CD4-positive, alpha-beta memory T cell (primary cell): ENCODE measurements at regions of chr14 and their contacts with region 1.

Region 1: DNA sequence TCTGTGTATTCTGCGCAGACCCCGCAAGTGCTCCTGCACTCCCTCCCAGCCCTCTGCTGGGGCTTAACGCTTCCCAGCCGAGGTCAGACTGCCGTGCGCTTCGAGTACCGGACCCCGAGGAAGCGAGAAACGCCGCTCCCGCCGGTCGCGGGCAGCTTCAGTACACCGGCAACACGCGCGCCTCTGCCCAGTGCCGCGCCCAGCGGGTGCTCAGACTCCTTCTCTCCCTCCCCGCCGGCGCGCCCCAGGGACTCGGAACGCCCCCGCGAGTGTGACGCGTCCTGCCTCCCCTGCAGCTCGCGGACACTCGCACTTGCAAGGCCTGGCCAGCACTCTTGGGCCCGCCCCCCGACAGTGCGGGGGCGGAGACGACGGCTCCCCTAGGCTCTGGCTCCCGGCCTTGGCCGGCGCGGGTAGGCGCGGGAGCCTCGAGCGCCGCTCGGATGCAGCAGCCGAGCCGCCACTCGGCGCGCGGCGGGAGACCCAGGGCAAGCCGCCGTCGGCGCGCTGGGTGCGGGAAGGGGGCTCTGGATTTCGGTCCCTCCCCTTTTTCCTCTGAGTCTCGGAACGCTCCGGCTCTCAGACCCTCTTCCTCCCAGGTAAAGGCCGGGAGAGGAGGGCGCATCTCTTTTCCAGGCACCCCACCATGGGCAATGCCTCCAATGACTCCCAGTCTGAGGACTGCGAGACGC is at the start of gene PTGER2:
- DNase-seq: peak; percentile 64 to 83 (median 74)
- H3K4me3 ChIP-seq: peak within 1 kb of the TSS; percentile 83 to 86
- H3K4me3 Mint-ChIP-seq: peak within 1 kb of the TSS; percentile 95 to 100 (median 99)
- H3K27ac ChIP-seq: peak within 1 kb of the TSS; percentile 59
- H3K27ac Mint-ChIP-seq: peak within 1 kb of the TSS; percentile 87 to 97 (median 92)
- H3K4me1 ChIP-seq: peaks cover 70% of the 10 kb centered on the region
- H3K4me1 Mint-ChIP-seq: peaks cover 45 to 90% (median 63%) of the 10 kb centered on the region in 4 donors
- H3K27me3 ChIP-seq: no peaks in the 10 kb centered on the region
- H3K27me3 Mint-ChIP-seq: peaks cover 0 to 2% of the 10 kb centered on the region in 2 donors
- total RNA-seq, gene PTGER2: 29.4 to 30.2 TPM

Region 2: DNA sequence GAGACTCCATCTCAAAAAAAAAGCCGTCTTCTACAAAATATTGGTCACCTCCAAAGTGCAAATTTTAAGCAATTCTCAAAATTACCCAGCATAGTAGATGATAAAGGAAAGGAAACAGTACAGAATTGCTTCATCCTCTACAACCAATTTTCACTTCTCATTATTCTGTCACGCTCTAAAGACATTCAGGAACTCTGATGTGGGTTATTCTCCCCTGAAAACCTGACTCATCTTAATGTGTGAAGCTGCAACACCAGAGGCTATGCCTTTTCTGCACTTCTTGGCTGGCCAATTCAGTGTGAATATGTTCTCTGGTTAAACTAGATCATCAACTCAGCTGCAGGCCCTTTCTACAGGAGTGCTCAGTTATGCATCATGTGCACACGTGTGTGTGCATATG is 11.1 kb after region 1 on chr14:
- CTCF ChIA-PET with region 1: interaction called, 9 read pairs
- POLR2A ChIA-PET with region 1: interaction called, 89 read pairs
- intact Hi-C with region 1: loop called (anchors 1 kb)
- DNase-seq: peak in 1 of 5 donors; percentile 53
- H3K4me3 ChIP-seq: no peak overlapping the region
- H3K4me3 Mint-ChIP-seq: peak overlapping the region in 7 of 8 donors; percentile 21 to 82 (median 59)
- H3K27ac ChIP-seq: no peak overlapping the region
- H3K27ac Mint-ChIP-seq: peak overlapping the region; percentile 0 to 89 (median 65)
- H3K4me1 ChIP-seq: peaks cover 87% of the 10 kb centered on the region
- H3K4me1 Mint-ChIP-seq: peaks cover 55 to 94% (median 74%) of the 10 kb centered on the region in 4 donors
- H3K27me3 ChIP-seq: no peaks in the 10 kb centered on the region
- H3K27me3 Mint-ChIP-seq: no peaks in the 10 kb centered on the region

Region 3: GRCh38 chr14:52351233-52352060 is 37.4 kb after region 1 on chr14:
- CTCF ChIA-PET with region 1: interaction called, 12 read pairs
- POLR2A ChIA-PET with region 1: interaction called, 81 read pairs
- intact Hi-C with region 1: loop called (anchors 1 kb)
- DNase-seq: no peak
- H3K4me3 ChIP-seq: peak overlapping the region; percentile 18 to 33
- H3K4me3 Mint-ChIP-seq: peak overlapping the region; percentile 83 to 90 (median 88)
- H3K27ac ChIP-seq: peak overlapping the region; percentile 27
- H3K27ac Mint-ChIP-seq: peak overlapping the region; percentile 90 to 95 (median 93)
- H3K4me1 ChIP-seq: peaks cover 75% of the 10 kb centered on the region
- H3K4me1 Mint-ChIP-seq: peaks cover 56 to 83% (median 68%) of the 10 kb centered on the region in 4 donors
- H3K27me3 ChIP-seq: no peaks in the 10 kb centered on the region
- H3K27me3 Mint-ChIP-seq: peaks cover 0 to 3% of the 10 kb centered on the region in 2 donors

Region 4: GRCh38 chr14:52402812-52403526 is 88.9 kb after region 1 on chr14:
- CTCF ChIA-PET with region 1: interaction called, 15 read pairs
- POLR2A ChIA-PET with region 1: interaction called, 44 read pairs
- intact Hi-C with region 1: loop called (anchors 2 kb)
- DNase-seq: peak in 4 of 5 donors; percentile 43 to 54 (median 50)
- H3K4me3 ChIP-seq: peak overlapping the region in 1 of 2 donors; percentile 9
- H3K4me3 Mint-ChIP-seq: peak overlapping the region in 6 of 8 donors; percentile 18 to 70 (median 50)
- H3K27ac ChIP-seq: no peak overlapping the region
- H3K27ac Mint-ChIP-seq: peak overlapping the region in 6 of 7 donors; percentile 5 to 33 (median 19)
- H3K4me1 ChIP-seq: peaks cover 67% of the 10 kb centered on the region
- H3K4me1 Mint-ChIP-seq: peaks cover 53 to 73% (median 63%) of the 10 kb centered on the region in 4 donors
- H3K27me3 ChIP-seq: no peaks in the 10 kb centered on the region
- H3K27me3 Mint-ChIP-seq: no peaks in the 10 kb centered on the region

Region 5: DNA sequence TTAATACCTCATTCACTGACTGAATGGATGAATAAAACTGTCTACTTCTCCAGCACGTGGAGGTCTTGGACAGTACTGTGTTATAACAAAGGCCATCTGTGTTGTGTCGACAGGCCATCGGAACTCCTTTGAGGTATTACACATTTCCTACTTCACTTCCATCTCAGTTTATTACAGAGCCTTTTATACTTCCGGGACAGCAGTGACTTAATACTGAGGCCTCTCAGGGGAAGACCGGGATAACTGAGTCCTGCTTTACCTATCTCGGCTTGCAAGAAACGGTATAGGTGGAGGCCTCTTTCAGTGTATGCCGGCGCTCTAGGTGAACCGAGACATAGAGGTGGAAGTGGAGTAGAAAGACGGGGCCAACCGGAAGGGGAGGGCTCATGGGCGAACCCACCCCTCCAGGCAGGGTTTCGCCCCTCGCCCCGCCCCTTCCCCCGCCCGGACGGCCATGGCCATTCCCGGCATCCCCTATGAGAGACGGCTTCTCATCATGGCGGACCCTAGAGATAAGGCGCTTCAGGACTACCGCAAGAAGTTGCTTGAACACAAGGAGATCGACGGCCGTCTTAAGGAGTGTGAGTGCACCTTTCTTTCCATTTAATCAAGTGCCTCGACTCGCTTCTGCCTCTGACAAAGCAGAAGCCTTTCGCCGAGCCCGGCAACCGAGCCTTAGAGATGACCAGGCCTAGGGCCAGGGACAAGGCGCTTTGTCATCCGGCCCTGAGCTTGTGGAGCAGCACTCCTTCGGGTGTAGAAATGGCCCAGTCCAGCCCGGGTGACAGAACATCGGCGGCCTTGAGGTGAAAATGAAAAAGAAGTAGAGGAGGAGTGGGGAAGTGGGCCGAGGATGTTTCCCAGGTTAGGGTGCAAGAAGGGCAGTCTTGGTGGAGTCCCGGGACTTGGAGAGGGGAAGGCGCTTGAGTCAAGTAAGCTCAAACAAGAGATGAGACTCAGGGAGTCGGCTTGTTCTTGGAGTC is 393.0 kb after region 1 on chr14 and contains the start of gene PSMC6:
- CTCF ChIA-PET with region 1: no interaction called
- POLR2A ChIA-PET with region 1: no interaction called
- intact Hi-C with region 1: loop called (anchors 5 kb)
- DNase-seq: peak; percentile 88 to 95 (median 90)
- H3K4me3 ChIP-seq: peak within 1 kb of the TSS; percentile 92 to 96
- H3K4me3 Mint-ChIP-seq: peak within 1 kb of the TSS; percentile 92 to 100 (median 96)
- H3K27ac ChIP-seq: peak within 1 kb of the TSS; percentile 77
- H3K27ac Mint-ChIP-seq: peak within 1 kb of the TSS; percentile 94 to 99 (median 98)
- H3K4me1 ChIP-seq: peaks cover 43% of the 10 kb centered on the region
- H3K4me1 Mint-ChIP-seq: peaks cover 20 to 56% (median 36%) of the 10 kb centered on the region in 4 donors
- H3K27me3 ChIP-seq: no peaks in the 10 kb centered on the region
- H3K27me3 Mint-ChIP-seq: no peaks in the 10 kb centered on the region
- total RNA-seq, gene PSMC6: 85.7 to 86.0 TPM